Panc1 (cell line): ENCODE measurements at regions of chr1 and their contacts with region 1.

Region 1: DNA sequence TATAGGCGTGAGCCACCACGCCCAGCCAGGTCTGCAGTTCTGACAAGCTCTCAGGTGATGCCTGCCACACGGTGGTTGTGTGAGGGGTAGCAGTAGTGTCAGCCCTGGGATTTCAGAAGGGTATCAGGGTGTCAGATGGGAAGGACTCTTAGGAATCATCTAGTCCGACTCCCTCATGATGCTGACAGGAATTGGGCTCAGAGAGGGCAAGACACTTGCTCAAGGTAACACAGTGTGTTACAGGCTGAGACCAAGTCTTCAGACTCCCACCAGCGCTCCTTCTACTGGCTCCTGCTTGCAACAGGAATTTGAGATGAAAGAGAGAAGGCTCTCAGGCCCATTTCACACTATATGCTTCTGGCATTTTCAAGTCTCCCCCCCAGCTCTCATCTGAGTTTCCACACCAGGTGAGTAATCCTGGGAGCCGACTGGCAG is 6.9 kb downstream of the HTR1D start:
- DNase-seq: no peak
- ATAC-seq: peak; percentile 89
- H3K4me3 ChIP-seq: no peak overlapping the region
- H3K27ac ChIP-seq: no peak overlapping the region
- H3K4me1 ChIP-seq: no peaks in the 10 kb centered on the region
- H3K27me3 ChIP-seq: no peaks in the 10 kb centered on the region
- CTCF ChIP-seq: peak; percentile 77

Region 2: DNA sequence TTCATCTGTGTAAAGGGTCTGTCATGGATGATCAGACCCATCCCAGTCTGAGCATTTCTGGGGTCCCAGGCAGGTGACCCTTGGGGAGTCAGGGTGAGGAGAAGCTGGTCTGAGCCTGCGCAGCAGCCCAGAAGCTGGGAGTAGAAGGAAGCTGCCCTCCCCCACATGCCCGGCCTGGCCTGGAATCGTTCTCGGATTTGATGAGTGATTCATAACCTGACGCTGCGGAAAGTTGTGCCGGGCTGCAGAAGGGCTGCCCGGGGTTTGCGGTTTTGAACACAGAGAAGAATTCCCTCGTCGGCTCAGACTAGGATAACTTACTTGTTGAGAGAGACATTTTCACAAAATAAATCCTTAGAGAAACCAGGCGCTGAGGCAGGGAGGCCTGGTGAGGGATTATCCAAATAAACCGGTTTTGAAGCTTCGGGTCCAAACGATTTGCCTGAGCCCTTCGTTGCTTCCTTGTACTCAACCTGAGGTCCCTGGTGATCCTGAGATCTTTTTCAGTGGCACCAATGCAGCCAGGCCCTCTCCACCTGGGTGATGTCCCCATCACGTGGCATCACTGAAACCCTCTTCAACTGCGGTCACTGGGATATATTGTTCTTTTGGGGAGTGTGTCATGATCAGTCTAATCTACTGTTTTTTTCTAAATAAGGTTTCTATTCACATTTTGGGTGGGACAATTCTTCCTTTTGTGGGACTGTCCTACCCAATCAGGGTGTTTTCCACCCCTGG is 470.6 kb before region 1 on chr1:
- CTCF ChIA-PET with region 1: interaction called, 10 read pairs
- POLR2A ChIA-PET with region 1: no interaction called
- in situ Hi-C with region 1: no loop called
- intact Hi-C with region 1: no loop called
- DNase-seq: peak; percentile 80
- ATAC-seq: peak; percentile 91
- H3K4me3 ChIP-seq: peak overlapping the region in 1 of 2 experiments; percentile 25; a peak in 2 of 4 replicates
- H3K27ac ChIP-seq: peak overlapping the region; percentile 83
- H3K4me1 ChIP-seq: peaks cover 33% of the 10 kb centered on the region
- H3K27me3 ChIP-seq: no peaks in the 10 kb centered on the region
- CTCF ChIP-seq: no peak

Region 3: GRCh38 chr1:23167351-23168143 is 42.8 kb before region 1 on chr1:
- CTCF ChIA-PET with region 1: no interaction called
- POLR2A ChIA-PET with region 1: no interaction called
- in situ Hi-C with region 1: no loop called
- intact Hi-C with region 1: no loop called
- DNase-seq: no peak
- ATAC-seq: peak; percentile 66
- H3K4me3 ChIP-seq: peak overlapping the region; percentile 74 to 96
- H3K27ac ChIP-seq: peak overlapping the region; percentile 77
- H3K4me1 ChIP-seq: peaks cover 23% of the 10 kb centered on the region; the same call in 1 of the 2 replicates
- H3K27me3 ChIP-seq: no peaks in the 10 kb centered on the region
- CTCF ChIP-seq: no peak

Region 4: GRCh38 chr1:23263380-23263887 is 53.1 kb after region 1 on chr1:
- CTCF ChIA-PET with region 1: no interaction called
- POLR2A ChIA-PET with region 1: no interaction called
- in situ Hi-C with region 1: loop called (anchors 5 kb)
- intact Hi-C with region 1: no loop called
- DNase-seq: no peak
- ATAC-seq: peak; percentile 51; the same call in 1 of the 2 replicates
- H3K4me3 ChIP-seq: no peak overlapping the region
- H3K27ac ChIP-seq: no peak overlapping the region
- H3K4me1 ChIP-seq: no peaks in the 10 kb centered on the region
- H3K27me3 ChIP-seq: no peaks in the 10 kb centered on the region
- CTCF ChIP-seq: no peak